ENCODE measurements at regions of chr7 and their contacts with region 1.

Region 1: DNA sequence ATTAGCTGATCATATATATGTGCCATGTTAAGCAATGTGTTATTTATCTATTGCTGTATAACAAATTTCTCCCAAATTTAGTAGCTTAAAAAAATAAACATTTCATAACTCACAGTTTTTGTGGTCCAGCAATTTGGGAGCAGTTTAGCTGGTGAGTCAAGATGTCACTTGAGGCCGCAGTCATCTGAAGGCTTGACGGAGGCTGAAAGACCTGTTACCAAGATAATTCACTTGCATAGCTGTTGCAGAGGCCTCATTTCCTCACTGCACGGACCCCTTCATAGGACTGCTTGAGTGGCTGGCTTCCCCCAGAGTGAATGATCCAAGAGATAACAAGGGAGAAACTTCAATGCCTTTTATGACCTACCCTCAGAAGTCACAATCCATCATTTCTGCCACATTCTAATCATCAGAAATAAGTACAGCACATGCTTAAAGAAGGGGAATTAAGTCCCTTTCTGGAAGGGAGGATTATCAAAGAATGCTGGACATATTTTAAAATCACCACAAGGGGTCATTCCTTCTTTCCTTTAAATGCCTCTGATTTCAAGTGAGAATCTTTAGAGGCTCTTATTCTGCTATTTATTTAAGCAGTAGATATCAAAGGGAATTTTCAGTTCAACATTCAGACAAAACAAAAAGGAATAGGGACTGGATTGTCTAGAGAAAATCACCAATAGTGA is 10.5 kb upstream of the SRPK2 start:
- DNase-seq: no peak
- H3K4me3 ChIP-seq: no peak overlapping the region
- H3K27ac ChIP-seq: no peak overlapping the region
- H3K4me1 ChIP-seq: no peaks in the 10 kb centered on the region
- H3K27me3 ChIP-seq: no peaks in the 10 kb centered on the region
- CTCF ChIP-seq: peak; percentile 17 to 32

Region 2: DNA sequence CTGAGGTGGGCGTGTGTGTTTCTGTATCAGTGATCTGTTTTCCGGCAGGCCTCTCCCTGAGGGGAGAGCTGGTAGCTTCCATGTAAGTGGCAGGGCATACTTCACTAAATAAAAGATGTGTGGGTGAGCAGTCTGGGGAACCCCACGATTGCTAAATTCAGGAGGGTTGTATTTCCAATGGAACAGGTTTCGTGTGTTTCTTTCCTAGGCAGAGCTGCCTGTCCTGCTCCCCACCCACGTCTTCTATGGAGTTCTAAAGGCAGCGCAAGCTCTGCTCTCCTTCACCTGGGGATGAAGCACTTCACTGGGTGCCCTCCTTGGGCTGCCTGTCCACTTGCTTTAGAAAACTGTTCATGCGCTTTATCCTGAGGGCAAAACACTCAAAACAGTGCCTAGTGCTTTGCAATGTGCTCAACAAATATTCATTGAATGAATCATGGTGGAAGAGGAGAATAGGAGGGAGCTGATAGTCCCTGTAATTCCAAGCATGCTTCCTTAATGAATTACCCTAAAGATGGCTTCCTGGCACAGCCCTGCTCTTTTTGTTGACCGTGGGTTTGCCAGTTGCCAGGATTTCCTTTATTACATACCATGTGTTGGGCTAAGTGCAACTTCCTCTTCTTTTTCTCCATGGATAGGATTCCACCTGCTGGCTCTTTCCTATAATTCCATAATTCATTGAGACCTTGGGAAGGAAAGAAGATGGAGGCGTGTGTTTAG is 40.1 kb after region 1 on chr7:
- CTCF ChIA-PET with region 1: no interaction called
- dilution Hi-C with region 1: no loop called
- in situ Hi-C with region 1: no loop called
- intact Hi-C with region 1: loop called (anchors 1 kb)
- DNase-seq: peak; percentile 95
- H3K4me3 ChIP-seq: peak overlapping the region; percentile 17 to 23 (median 17)
- H3K27ac ChIP-seq: peak overlapping the region; percentile 88
- H3K4me1 ChIP-seq: peaks cover 21% of the 10 kb centered on the region
- H3K27me3 ChIP-seq: no peaks in the 10 kb centered on the region
- CTCF ChIP-seq: peak in 1 of 2 donors; percentile 15

Region 3: GRCh38 chr7:105487579-105488571 is 88.7 kb after region 1 on chr7:
- CTCF ChIA-PET with region 1: no interaction called
- dilution Hi-C with region 1: no loop called
- in situ Hi-C with region 1: no loop called
- intact Hi-C with region 1: loop called (anchors 1 kb)
- DNase-seq: peak; percentile 41
- H3K4me3 ChIP-seq: no peak overlapping the region
- H3K27ac ChIP-seq: no peak overlapping the region
- H3K4me1 ChIP-seq: peaks cover 6% of the 10 kb centered on the region
- H3K27me3 ChIP-seq: no peaks in the 10 kb centered on the region
- CTCF ChIP-seq: peak; percentile 25 to 58

Region 4: GRCh38 chr7:105512415-105512814 is 113.2 kb after region 1 on chr7:
- CTCF ChIA-PET with region 1: no interaction called
- dilution Hi-C with region 1: no loop called
- in situ Hi-C with region 1: no loop called
- intact Hi-C with region 1: no loop called
- DNase-seq: no peak
- H3K4me3 ChIP-seq: no peak overlapping the region
- H3K27ac ChIP-seq: no peak overlapping the region
- H3K4me1 ChIP-seq: no peaks in the 10 kb centered on the region
- H3K27me3 ChIP-seq: no peaks in the 10 kb centered on the region
- CTCF ChIP-seq: no peak

Region 5: GRCh38 chr7:105589356-105590077 is 190.3 kb after region 1 on chr7:
- CTCF ChIA-PET with region 1: no interaction called
- dilution Hi-C with region 1: no loop called
- in situ Hi-C with region 1: no loop called
- intact Hi-C with region 1: loop called (anchors 1 kb)
- DNase-seq: peak; percentile 76
- H3K4me3 ChIP-seq: no peak overlapping the region
- H3K27ac ChIP-seq: no peak overlapping the region
- H3K4me1 ChIP-seq: no peaks in the 10 kb centered on the region
- H3K27me3 ChIP-seq: no peaks in the 10 kb centered on the region
- CTCF ChIP-seq: peak; percentile 74 to 83

Region 6: DNA sequence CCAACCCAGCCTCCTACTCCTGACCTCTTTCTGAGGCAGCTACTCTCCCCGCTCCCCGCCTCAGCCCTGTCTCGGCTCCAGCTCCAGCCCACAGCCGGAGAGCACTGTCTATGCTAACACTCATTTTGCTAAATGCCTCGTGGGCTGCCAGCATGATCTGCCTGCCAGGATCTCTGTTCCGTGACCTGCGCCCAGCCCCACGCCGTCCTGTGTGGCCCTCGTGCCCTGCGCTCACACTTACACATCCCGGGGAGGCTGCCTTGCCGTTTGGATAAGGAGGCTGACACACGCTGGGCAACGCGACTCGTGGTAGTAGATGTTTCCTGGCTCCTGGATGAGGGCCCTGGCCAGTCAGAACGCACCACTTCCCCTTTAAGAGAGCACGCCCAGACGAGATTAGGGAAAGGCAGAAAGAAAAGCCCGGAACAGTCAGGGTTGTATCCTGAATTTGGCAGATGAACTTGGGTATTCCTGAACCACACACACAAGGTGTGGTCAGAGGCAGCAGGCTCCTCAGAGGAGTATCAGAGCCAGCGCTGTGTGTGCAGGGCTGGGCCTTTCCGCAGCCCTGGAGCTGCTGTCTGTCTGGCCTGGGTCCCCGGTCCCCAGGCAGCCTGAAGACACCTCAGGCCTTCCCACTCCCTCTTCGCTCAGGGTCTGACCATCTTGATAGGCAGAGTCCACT is 279.8 kb after region 1 on chr7:
- CTCF ChIA-PET with region 1: interaction called, 15 read pairs
- dilution Hi-C with region 1: no loop called
- in situ Hi-C with region 1: no loop called
- intact Hi-C with region 1: no loop called
- DNase-seq: peak; percentile 57
- H3K4me3 ChIP-seq: peak overlapping the region in 1 of 3 experiments; percentile 32
- H3K27ac ChIP-seq: no peak overlapping the region
- H3K4me1 ChIP-seq: peaks cover 3% of the 10 kb centered on the region
- H3K27me3 ChIP-seq: no peaks in the 10 kb centered on the region
- CTCF ChIP-seq: no peak

Measured in mammary epithelial cell (primary cell).